ENCODE measurements at regions of chr2 and their contacts with region 1.

Region 1: GRCh38 chr2:24409700-24410556 is 49.6 kb upstream of the ITSN2 start:
- DNase-seq: peak; percentile 19
- H3K4me3 Mint-ChIP-seq: no peak overlapping the region
- H3K27ac Mint-ChIP-seq: no peak overlapping the region
- H3K4me1 Mint-ChIP-seq: peaks cover 1% of the 10 kb centered on the region
- H3K27me3 Mint-ChIP-seq: peaks cover 5% of the 10 kb centered on the region

Region 2: DNA sequence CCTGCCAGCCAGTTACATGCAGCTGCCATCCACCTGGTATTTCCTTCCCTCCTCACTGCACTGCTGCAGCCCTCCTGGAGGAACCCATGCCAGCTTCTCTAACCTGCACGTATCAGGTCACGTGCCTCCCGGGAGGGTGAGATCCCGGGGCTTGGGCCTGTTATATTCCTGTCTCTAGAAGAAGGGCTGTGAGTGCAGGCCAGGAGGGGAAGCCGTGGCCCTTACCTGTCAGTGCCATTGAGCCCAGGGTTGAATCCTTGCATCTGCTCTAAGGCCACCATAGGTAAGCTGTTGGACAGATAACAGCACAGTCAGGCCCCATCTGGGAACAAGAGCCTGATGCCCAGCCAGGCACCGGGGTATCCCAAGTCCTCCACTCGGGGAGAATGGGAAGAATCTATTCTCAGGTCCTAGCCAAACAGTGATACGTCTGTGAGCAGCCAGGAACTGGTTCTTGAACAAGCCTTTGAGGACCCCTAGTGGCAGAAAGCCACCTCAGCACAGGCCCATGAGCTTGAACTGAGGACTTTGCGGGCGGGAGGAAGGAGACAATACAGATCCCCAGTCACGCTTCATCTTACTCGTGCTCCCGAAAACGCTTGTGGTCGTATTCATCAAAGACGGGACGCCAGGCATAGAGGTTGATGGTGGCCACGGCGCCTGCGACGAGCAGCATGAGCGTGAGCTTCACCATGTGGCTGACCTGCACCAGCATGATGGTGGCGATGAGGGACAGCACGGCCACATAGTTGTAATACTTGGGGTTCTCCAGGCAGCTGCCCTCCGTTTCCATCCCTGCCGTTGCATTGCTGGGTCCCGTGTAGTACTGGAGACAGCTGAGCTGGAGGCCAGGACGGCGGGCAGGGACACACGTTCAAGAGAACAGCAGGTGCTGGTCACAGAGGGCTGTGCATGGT is 417.7 kb after region 1 on chr2:
- intact Hi-C with region 1: loop called (anchors 1 kb)
- DNase-seq: peak; percentile 61
- H3K4me3 Mint-ChIP-seq: no peak overlapping the region
- H3K27ac Mint-ChIP-seq: peak overlapping the region; percentile 93
- H3K4me1 Mint-ChIP-seq: peaks cover 21% of the 10 kb centered on the region
- H3K27me3 Mint-ChIP-seq: no peaks in the 10 kb centered on the region

Region 3: DNA sequence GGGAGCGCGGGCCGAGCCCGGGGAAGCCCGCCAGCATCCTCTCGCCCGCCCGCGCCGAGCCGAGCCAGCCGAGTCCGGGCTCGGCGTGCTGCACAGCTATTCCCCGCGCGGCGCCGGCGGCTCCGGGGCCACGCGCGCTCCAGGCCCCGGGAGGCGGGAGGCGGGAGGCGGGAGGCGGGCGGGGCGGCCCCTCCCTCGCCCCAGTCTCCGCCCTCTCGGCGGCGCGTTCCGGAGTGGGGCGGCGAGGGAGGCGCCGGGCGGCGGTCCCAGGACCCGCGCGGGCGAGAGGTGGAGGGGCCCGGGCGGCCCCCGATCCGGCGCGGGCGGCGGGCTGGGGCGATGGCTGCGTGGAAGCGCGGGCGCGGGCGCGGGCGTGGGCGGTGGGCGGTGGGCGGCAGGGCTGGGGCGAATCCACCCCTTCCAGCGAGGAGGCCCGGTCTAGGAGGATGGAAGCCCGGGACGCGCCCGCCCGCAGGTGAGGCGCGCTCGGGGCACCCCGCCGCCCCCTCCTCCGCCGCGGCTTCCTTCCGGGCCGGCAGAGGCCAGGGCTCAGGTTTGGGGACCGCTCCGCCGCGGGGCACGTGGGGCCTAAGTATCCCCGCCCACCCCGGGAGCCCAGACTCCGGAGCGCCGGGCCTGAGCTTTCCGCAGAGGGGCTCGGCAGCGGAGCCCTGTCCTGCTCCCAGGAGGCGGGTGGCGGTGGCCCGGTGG is 510.3 kb after region 1 on chr2 and contains the start of gene ADCY3:
- intact Hi-C with region 1: loop called (anchors 5 kb)
- DNase-seq: peak; percentile 55
- H3K4me3 Mint-ChIP-seq: peak within 1 kb of the TSS; percentile 85
- H3K27ac Mint-ChIP-seq: peak within 1 kb of the TSS; percentile 80
- H3K4me1 Mint-ChIP-seq: peaks cover 26% of the 10 kb centered on the region
- H3K27me3 Mint-ChIP-seq: no peaks in the 10 kb centered on the region
- total RNA-seq, gene ADCY3: 108 and 112 TPM in 2 replicates

Region 4: DNA sequence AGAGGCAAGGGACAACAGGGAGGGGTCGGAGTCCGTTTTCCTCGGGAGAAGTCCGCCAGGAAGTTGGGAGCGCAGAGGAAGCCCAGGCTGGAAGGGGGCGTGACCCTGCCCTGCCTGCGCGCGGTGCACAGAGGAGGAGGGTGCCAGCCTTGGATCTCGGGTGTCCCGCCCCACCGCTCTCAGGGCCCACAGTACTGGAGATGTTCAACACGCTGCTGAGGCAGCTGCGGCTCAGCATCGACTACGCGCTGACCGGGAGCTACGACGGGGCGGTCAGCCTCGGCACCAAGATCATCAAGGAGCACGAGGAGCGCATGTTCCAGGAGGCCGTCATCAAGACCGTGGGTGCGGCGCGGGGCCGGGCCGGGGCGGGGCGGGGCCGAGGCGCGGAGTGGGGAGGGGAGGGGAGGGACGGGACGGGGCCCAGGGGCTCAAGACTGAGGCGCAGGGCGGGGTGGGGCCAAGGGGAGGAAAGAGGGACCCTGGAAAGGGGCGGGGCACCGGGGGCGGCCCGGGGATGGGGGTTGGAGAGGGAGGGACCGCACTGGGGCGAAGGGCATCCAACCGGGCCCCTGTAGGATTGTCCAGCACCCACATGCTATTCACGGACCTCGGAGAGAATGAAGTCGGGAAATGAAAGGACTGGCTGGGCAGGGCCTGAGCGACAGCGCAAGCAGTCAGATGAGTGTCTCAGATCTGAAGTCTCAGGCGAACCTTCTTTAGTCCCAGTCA is 721.8 kb after region 1 on chr2:
- intact Hi-C with region 1: loop called (anchors 2 kb)
- DNase-seq: no peak
- H3K4me3 Mint-ChIP-seq: peak overlapping the region; percentile 45
- H3K27ac Mint-ChIP-seq: no peak overlapping the region
- H3K4me1 Mint-ChIP-seq: peaks cover 2% of the 10 kb centered on the region
- H3K27me3 Mint-ChIP-seq: peaks cover 53% of the 10 kb centered on the region

Region 5: DNA sequence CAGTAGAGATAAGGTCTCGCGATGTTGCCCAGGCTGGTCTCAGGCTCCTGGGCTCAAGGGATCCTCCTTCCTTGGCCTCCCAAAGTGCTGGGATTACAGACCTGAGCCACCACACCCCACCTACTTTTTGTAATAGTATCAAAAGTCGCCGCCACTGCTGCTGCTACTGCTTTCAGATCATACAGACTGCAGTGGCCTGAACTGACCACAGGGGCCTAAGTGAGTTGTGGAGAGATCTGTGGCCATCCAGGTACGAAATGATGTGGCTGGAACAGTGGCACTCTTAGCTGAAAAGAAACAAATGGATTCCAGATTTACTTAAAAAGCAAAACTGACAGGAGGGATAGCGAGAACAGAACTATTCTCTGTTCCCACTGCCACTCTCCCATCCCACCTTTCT is 791.3 kb after region 1 on chr2:
- intact Hi-C with region 1: loop called (anchors 2 kb)
- DNase-seq: no peak
- H3K4me3 Mint-ChIP-seq: no peak overlapping the region
- H3K27ac Mint-ChIP-seq: no peak overlapping the region
- H3K4me1 Mint-ChIP-seq: peaks cover 2% of the 10 kb centered on the region
- H3K27me3 Mint-ChIP-seq: peaks cover 14% of the 10 kb centered on the region

Measured in activated T-helper 2 cell treated with anti-CD3 and anti-CD28 coated beads, Interferon-gamma antibody, Interleukin-2, Interleukin-4, amounts not matched to agents 10 μg/mL and 5 μg/mL and 100 μg/mL, durations not matched to agents 14 hours and 24 hours and 36 hours (primary cell).